ENCODE measurements at regions of chr12 and their contacts with region 1.

Region 1: DNA sequence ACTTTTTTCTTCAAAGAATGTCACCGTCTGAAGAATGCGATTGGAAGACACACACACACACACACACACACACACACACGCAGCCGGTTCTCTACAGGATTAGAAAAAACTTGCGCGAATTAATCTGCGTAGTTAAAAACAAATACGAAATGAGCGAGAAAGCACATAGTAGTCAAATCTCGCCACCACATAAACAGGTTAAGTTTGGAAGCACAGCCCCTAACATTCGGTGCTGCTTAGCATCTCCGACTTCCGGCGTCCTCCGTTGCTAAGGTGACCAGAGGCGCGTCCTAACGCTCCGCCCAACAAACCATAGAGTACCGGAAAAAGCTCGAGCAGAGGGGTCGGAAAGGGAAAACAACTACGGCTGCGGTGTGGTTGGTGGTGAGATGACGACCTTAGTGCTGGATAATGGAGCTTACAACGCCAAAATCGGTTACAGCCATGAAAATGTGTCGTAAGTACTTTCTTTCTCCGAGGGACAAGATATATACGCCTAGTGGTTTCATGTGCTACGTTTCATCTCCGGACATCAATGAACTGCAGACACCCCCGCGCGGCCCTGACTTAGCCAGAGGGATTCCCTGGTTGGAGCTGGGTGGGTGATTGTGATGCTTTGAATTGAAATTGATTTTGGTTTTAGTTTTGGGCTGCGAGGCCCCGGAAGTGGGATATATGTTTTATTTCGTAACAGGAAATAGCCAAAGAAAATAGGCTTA is at the start of gene ACTR6:
- DNase-seq: peak; percentile 96 to 99 (median 98)
- ATAC-seq: peak; percentile 82
- H3K4me3 ChIP-seq: peak within 1 kb of the TSS; percentile 57 to 75
- H3K4me3 Mint-ChIP-seq: peak within 1 kb of the TSS; percentile 97
- H3K27ac ChIP-seq: peak within 1 kb of the TSS; percentile 90 to 91
- H3K27ac Mint-ChIP-seq: peak within 1 kb of the TSS; percentile 100
- H3K4me1 ChIP-seq: peaks cover 19% of the 10 kb centered on the region
- H3K4me1 Mint-ChIP-seq: peaks cover 41% of the 10 kb centered on the region
- H3K27me3 ChIP-seq: no peaks in the 10 kb centered on the region
- H3K27me3 Mint-ChIP-seq: no peaks in the 10 kb centered on the region
- CTCF ChIP-seq: no peak
- total RNA-seq, gene ACTR6: 18.8 to 21.4 TPM

Region 2: DNA sequence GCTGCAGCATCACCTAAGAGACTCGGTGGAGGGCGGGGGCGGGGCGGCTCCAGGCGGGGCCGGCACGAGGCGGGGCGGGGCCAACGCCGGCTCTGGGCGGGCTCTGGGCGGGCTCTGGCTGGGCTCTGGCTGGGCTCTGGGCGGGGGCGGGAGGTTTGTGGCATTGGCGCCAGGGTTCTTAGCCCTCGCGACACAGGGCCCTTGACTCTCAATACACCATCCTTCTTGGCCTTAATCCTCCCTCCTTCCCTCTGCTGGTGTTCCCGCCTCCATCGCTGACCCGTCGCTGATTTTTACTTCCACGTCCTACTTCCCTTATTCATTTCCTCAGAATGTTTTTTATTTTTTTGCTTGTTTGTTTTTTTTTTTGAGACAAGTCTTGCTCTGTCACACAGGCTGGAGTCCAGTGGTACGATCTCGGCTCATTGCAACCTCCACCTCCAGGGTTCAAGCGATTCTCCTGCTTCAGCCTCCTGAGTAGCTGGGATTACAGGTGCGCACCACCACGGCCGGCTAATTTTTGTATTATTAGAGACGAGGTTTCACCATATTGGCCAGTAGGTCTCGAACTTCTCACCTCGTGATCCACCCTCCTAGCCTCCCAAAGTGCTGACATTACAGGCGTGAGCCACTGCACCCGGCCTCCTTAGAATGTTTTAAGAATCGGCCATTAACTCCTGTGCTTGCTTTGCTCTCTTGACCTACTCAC is 57.6 kb before region 1 on chr12 and contains the start of gene BLTP3B:
- CTCF ChIA-PET with region 1: no interaction called
- POLR2A ChIA-PET with region 1: interaction called, 3 read pairs
- intact Hi-C with region 1: loop called (anchors 1 kb)
- DNase-seq: peak; percentile 86 to 92 (median 89)
- ATAC-seq: peak; percentile 96
- H3K4me3 ChIP-seq: peak within 1 kb of the TSS; percentile 94 to 97
- H3K4me3 Mint-ChIP-seq: peak within 1 kb of the TSS; percentile 93
- H3K27ac ChIP-seq: peak within 1 kb of the TSS; percentile 90 to 95
- H3K27ac Mint-ChIP-seq: peak within 1 kb of the TSS; percentile 97
- H3K4me1 ChIP-seq: peaks cover 6% of the 10 kb centered on the region
- H3K4me1 Mint-ChIP-seq: peaks cover 36% of the 10 kb centered on the region
- H3K27me3 ChIP-seq: no peaks in the 10 kb centered on the region
- H3K27me3 Mint-ChIP-seq: no peaks in the 10 kb centered on the region
- CTCF ChIP-seq: no peak
- total RNA-seq, gene BLTP3B: 29.4 to 37.8 TPM

Region 3: GRCh38 chr12:100163416-100164152 is 37.0 kb before region 1 on chr12:
- CTCF ChIA-PET with region 1: interaction called, 6 read pairs
- POLR2A ChIA-PET with region 1: interaction called, 3 read pairs
- intact Hi-C with region 1: loop called (anchors 2 kb)
- DNase-seq: peak; percentile 38 to 81 (median 70)
- ATAC-seq: peak; percentile 100
- H3K4me3 ChIP-seq: peak overlapping the region in 1 of 2 experiments; percentile 19
- H3K4me3 Mint-ChIP-seq: peak overlapping the region; percentile 71
- H3K27ac ChIP-seq: no peak overlapping the region
- H3K27ac Mint-ChIP-seq: no peak overlapping the region
- H3K4me1 ChIP-seq: peaks cover 9% of the 10 kb centered on the region
- H3K4me1 Mint-ChIP-seq: peaks cover 11% of the 10 kb centered on the region
- H3K27me3 ChIP-seq: no peaks in the 10 kb centered on the region
- H3K27me3 Mint-ChIP-seq: no peaks in the 10 kb centered on the region
- CTCF ChIP-seq: peak; percentile 28

Region 4: DNA sequence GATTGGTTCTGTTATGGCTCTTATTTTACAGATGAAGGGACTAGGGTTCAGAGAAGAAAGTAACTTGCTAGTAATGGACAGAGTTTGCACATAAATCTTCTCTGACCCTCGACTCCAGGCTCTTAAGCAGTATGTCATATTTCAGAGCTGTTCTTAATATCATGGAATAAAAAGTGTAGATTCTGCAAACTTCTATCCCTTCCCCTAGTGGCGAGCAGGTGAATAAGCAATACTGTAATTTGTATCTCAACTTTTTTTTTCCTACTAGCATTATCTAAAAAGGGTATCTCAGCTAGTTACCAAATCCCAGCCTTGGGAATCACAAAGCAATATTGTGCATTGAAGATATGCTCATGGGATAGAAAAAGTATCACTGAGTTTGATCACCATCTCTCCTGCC is 677.2 kb after region 1 on chr12:
- CTCF ChIA-PET with region 1: no interaction called
- POLR2A ChIA-PET with region 1: no interaction called
- intact Hi-C with region 1: no loop called
- DNase-seq: no peak
- ATAC-seq: no peak
- H3K4me3 ChIP-seq: no peak overlapping the region
- H3K4me3 Mint-ChIP-seq: no peak overlapping the region
- H3K27ac ChIP-seq: no peak overlapping the region
- H3K27ac Mint-ChIP-seq: no peak overlapping the region
- H3K4me1 ChIP-seq: no peaks in the 10 kb centered on the region
- H3K4me1 Mint-ChIP-seq: no peaks in the 10 kb centered on the region
- H3K27me3 ChIP-seq: no peaks in the 10 kb centered on the region
- H3K27me3 Mint-ChIP-seq: no peaks in the 10 kb centered on the region
- CTCF ChIP-seq: no peak

Region 5: GRCh38 chr12:101407436-101408345 is 1207.1 kb after region 1 on chr12 and contains the start of gene ARL1:
- CTCF ChIA-PET with region 1: no interaction called
- POLR2A ChIA-PET with region 1: no interaction called
- intact Hi-C with region 1: loop called in 1 of 2 experiments (anchors 5 kb)
- DNase-seq: peak; percentile 47 to 87 (median 76)
- ATAC-seq: peak; percentile 82
- H3K4me3 ChIP-seq: peak within 1 kb of the TSS; percentile 90 to 98
- H3K4me3 Mint-ChIP-seq: peak within 1 kb of the TSS; percentile 97
- H3K27ac ChIP-seq: peak within 1 kb of the TSS; percentile 84 to 85
- H3K27ac Mint-ChIP-seq: peak within 1 kb of the TSS; percentile 96
- H3K4me1 ChIP-seq: peaks cover 19% of the 10 kb centered on the region
- H3K4me1 Mint-ChIP-seq: peaks cover 32% of the 10 kb centered on the region
- H3K27me3 ChIP-seq: no peaks in the 10 kb centered on the region
- H3K27me3 Mint-ChIP-seq: no peaks in the 10 kb centered on the region
- CTCF ChIP-seq: no peak
- total RNA-seq, gene ARL1: 24.7 to 29.3 TPM

Measured in CD8-positive, alpha-beta T cell (primary cell).